ENCODE measurements at regions of chr2 and their contacts with region 1.

Region 1: GRCh38 chr2:218852911-218853667 is 6.5 kb upstream of the WNT6 start:
- DNase-seq: peak; percentile 43
- H3K4me3 ChIP-seq: no peak overlapping the region
- H3K27ac ChIP-seq: no peak overlapping the region
- H3K4me1 ChIP-seq: peaks cover 19% of the 10 kb centered on the region
- H3K27me3 ChIP-seq: no peaks in the 10 kb centered on the region
- CTCF ChIP-seq: peak; percentile 67 to 79

Region 2: DNA sequence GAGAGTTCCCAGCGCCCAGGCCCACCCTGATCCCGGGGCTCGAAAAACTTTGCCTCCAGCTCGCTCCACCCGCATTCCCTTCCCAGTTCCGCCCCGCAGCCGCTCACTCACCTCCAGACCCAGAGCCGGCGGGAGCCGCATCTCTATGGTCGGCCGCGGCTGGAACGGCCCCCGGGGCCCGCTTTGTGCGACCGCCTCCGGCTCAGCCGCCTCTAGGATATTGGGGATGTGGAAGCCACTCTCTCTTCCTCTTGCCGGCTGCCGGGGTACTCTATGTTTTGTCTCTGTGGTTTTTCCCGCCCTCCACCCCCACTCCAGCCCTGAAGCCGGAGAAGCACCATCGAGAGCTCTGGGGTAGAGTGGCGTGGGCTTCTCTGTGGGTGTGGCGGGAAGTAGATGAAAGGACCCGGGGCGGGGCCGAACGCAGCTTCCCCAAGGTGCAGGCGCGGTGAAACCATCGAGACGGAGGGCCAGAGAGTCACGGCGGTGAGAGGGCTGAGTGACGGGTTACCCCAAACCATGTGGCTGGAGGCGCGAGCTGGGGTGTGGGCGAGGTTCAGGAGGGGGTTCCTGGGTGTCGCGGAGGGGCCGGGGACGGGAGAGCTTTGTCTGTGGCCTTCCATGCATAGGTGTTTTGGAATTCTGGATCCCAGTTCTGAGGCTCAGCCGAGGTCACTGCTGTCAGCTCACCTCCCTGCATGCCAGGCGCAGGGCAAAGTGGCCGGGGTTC is 193.7 kb before region 1 on chr2 and contains the starts of genes BCS1L and ZNF142:
- CTCF ChIA-PET with region 1: no interaction called
- dilution Hi-C with region 1: no loop called
- in situ Hi-C with region 1: loop called in 1 of 2 experiments (anchors 10 kb)
- intact Hi-C with region 1: no loop called
- DNase-seq: peak; percentile 92
- H3K4me3 ChIP-seq: peak within 1 kb of the TSS; percentile 84 to 87 (median 86)
- H3K27ac ChIP-seq: peak within 1 kb of the TSS; percentile 56
- H3K4me1 ChIP-seq: peaks cover 10% of the 10 kb centered on the region
- H3K27me3 ChIP-seq: no peaks in the 10 kb centered on the region
- CTCF ChIP-seq: no peak
- total RNA-seq, gene BCS1L: 28.8 to 53.4 TPM
- total RNA-seq, gene ZNF142: 16.0 to 34.5 TPM

Region 3: DNA sequence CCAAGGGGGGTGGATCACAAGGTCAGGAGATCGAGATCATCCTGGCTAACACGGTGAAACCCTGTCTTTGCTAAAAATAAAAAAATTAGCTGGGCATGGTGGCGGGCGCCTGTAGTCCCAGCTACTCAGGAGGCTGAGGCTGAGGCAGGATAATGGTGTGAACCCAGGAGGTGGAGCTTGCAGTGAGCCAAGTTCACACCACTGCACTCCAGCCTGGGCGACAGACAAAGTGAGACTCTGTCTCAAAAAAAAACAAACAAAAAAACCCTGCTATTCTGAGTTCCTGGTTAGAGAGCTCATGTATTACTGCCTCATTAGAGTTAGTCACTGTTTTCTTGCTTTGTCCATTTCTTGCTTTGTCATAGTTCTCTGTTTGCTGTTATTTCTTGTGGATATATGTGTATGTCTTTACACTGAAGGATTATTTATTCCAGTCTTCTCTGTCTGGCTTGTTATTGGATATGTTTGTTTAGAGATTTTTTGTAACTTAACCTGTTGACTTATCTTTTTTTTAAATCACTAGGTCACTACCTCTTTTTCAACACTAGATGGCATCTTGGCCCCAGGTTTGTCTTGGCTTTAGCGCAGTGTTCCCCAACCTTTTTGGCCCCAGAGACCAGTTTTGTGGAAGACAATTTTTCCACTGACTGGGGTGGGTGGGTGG is 125.5 kb before region 1 on chr2:
- CTCF ChIA-PET with region 1: no interaction called
- dilution Hi-C with region 1: no loop called
- in situ Hi-C with region 1: loop called in 1 of 2 experiments (anchors 5 kb)
- intact Hi-C with region 1: no loop called
- DNase-seq: peak; percentile 41
- H3K4me3 ChIP-seq: no peak overlapping the region
- H3K27ac ChIP-seq: no peak overlapping the region
- H3K4me1 ChIP-seq: peaks cover 20% of the 10 kb centered on the region
- H3K27me3 ChIP-seq: no peaks in the 10 kb centered on the region
- CTCF ChIP-seq: peak; percentile 50 to 60

Region 4: DNA sequence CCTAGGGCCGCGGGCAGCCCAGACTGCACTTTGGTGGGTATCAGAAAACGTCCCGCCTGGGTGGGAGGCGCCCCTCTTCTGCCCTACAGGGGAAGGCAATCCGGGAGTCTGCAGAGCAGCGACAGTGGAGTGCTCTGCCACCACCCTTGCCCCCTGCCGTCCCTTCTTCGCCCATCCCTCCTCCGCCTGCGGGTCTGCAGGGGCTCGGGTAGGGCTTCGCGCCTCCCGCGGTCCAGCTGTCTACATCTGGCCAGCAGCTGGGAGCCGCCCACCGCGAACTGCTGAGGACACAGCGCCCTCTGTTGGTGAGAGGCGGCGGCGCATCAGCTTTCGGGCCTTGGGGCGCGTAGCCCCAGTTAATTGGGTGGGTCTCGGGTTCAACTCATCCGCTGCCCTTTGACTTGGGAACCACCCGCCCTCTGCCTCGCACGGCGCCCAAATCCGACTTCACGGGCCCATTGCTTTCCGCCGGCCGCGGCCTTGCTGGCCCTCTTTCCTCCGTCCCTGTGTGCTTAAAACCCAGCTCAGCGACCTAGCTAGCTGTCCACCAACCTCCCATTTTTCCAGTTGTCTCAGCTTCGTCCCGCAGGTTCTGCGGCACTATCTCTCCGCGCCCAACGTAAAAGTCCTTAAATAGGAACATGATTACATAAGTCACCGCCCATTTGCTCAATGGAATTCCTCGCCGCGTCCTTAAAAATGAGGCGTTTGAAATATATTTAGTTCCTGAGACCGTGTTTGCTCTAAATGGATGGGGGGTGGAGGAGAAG is 45.2 kb after region 1 on chr2:
- CTCF ChIA-PET with region 1: no interaction called
- dilution Hi-C with region 1: no loop called
- in situ Hi-C with region 1: no loop called
- intact Hi-C with region 1: loop called (anchors 1 kb)
- DNase-seq: peak; percentile 36
- H3K4me3 ChIP-seq: no peak overlapping the region
- H3K27ac ChIP-seq: no peak overlapping the region
- H3K4me1 ChIP-seq: peaks cover 49% of the 10 kb centered on the region
- H3K27me3 ChIP-seq: no peaks in the 10 kb centered on the region
- CTCF ChIP-seq: peak; percentile 64 to 97

Region 5: DNA sequence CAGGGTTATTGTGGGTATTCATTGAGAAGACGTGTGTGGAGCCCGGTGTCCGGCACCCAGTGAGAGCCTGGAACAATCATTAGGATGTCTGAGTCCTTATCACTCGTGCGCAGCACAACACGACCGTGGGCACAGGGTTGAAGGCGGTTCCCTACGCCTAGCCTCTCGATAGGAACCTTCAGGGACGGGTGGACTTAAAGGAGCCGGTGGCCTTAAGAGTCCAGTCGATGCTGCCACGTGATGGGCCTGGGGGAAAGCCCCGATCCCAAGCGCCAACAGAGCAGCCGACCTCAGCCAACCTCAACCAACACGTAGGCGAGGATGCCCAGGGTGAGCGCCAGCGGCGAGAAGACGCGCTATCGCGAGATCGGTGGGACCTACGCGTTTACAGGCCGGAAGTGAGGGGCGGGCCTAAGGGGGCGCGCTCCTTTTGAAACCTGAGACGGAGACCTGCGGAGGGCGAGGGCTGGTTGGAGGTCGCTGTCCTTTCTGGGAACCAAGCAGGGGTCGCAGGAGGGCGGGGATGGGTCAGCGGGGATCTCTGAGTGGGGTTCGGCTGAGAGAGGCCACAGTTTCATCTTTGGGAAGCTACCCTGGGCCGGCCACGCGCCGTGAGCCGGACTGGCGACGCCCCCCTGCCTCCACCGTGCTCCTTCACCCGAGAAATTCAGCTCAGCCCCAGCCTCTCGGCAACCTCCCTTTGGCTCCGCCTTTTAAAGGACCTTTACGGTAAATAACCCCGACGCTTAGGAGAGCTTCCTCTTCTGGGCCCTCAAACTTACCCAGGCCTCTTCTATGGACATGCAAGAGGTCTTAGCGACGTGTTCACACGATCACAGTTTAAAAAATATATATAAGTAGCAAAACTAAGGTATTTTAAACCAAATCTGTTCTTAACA is 55.9 kb after region 1 on chr2:
- CTCF ChIA-PET with region 1: no interaction called
- dilution Hi-C with region 1: no loop called
- in situ Hi-C with region 1: no loop called
- intact Hi-C with region 1: no loop called
- DNase-seq: peak; percentile 78
- H3K4me3 ChIP-seq: peak overlapping the region; percentile 58 to 74 (median 67)
- H3K27ac ChIP-seq: peak overlapping the region; percentile 52
- H3K4me1 ChIP-seq: peaks cover 8% of the 10 kb centered on the region
- H3K27me3 ChIP-seq: no peaks in the 10 kb centered on the region
- CTCF ChIP-seq: no peak

Region 6: DNA sequence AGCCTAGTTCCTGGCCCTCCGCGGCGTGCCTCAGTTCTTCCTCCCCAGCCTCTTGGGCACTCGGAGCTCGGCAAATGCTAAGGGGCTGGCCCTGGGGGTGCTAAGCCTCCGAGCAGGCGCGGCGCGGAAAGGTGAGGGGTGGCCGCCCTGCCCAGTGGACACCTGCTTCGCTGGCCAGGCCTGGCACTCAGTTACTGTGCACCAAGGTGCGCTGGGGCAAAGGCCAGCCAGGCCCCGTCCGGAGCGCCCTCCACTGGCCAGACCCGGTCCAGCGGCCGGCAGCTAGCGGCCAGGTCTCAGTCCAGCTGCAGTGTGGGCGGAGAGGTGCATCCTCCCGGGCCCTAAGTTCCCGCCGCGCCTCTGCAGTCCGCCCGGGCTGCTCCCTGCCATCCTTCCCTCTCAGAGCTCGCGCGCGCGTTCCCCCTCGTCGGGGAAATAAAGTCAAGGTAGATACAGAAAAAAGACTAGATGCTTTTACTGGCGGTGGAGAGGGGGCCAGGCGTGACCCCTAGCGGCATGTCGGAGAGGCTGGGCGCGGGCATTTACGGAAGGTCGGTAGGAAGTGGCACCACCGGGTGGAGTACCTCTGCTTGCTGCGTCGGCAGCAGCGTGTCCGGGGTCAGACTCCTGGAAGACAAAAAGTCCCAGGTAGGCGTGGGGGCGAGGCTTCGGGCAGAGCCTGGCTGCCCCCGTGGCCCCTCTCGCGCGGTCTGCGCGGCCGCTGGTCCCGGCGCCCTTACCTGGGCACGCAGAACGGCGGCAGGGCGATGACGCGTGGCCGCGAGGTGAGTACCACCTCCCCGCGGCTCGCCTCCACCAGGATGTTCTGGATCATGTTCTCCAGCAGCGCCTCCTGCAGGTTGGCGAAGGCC is 149.5 kb after region 1 on chr2:
- CTCF ChIA-PET with region 1: no interaction called
- dilution Hi-C with region 1: no loop called
- in situ Hi-C with region 1: no loop called
- intact Hi-C with region 1: loop called (anchors 2 kb)
- DNase-seq: peak; percentile 40
- H3K4me3 ChIP-seq: peak overlapping the region; percentile 7 to 39 (median 31)
- H3K27ac ChIP-seq: no peak overlapping the region
- H3K4me1 ChIP-seq: peaks cover 18% of the 10 kb centered on the region
- H3K27me3 ChIP-seq: peaks cover 5% of the 10 kb centered on the region
- CTCF ChIP-seq: peak; percentile 38 to 62

Measured in mammary epithelial cell (primary cell).